Activated CD4-positive, alpha-beta memory T cell treated with anti-CD3 and anti-CD28 coated beads for 36 hours (primary cell): ENCODE measurements at regions of chr11 and their contacts with region 1.

Region 1: DNA sequence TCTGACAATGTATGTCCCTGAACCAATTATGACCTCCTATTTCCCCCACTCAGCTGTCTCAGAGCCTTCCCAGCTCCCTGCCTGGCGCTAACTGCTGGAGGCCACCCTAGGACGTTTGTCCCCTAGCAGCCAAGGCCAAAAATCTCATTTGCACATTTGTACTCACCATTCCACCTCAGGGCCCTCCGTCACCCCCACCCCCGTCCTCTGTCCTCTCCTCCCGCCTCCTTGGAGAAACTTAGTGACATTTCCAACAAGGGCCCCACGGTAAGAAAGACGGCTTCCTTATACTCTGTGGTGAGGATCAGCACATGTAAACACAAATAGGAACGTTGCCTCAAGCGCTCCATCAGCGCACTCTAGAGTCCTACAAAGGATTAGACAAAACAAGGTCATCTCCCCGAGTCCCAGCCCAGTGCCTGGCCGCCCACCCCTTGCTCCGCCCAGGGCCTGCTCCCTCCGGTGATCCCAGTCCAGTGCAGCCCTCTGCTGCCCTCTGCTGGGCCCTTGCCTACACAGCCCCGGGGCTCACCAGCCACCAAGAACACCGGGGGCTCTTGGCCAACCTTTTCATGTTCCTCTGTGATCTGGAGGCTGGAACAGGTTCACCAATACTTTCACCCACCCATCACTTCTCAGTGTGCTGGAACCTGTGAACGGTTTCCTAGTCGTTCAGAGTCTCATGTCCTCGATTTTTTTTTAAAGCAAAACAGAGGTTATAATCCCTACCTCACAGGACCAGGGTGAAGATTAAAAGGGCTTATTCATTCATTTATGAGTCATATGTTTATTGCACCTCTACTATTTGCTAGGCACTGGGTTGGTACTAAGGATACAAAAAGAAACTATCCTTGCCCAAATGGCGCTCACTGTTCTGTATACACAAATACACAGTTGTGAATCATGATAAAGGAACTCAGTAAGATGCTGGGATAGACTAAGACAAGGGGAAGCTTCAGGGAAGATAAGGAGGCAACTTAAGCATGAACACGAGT is 15.3 kb upstream of the CTR9 start:
- DNase-seq: peak; percentile 92
- H3K4me3 Mint-ChIP-seq: peak overlapping the region; percentile 53
- H3K27ac Mint-ChIP-seq: no peak overlapping the region
- H3K4me1 Mint-ChIP-seq: peaks cover 11% of the 10 kb centered on the region
- H3K27me3 Mint-ChIP-seq: peaks cover 2% of the 10 kb centered on the region

Region 2: GRCh38 chr11:10405855-10406592 is 329.8 kb before region 1 on chr11:
- CTCF ChIA-PET with region 1: interaction called, 46 read pairs
- POLR2A ChIA-PET with region 1: no interaction called
- intact Hi-C with region 1: loop called (anchors 1 kb)
- DNase-seq: peak; percentile 60
- H3K4me3 Mint-ChIP-seq: no peak overlapping the region
- H3K27ac Mint-ChIP-seq: no peak overlapping the region
- H3K4me1 Mint-ChIP-seq: peaks cover 15% of the 10 kb centered on the region
- H3K27me3 Mint-ChIP-seq: no peaks in the 10 kb centered on the region

Region 3: GRCh38 chr11:10413268-10413667 is 322.5 kb before region 1 on chr11:
- CTCF ChIA-PET with region 1: interaction called, 14 read pairs
- POLR2A ChIA-PET with region 1: no interaction called
- intact Hi-C with region 1: loop called (anchors 1 kb)
- DNase-seq: peak; percentile 54
- H3K4me3 Mint-ChIP-seq: no peak overlapping the region
- H3K27ac Mint-ChIP-seq: no peak overlapping the region
- H3K4me1 Mint-ChIP-seq: peaks cover 31% of the 10 kb centered on the region
- H3K27me3 Mint-ChIP-seq: no peaks in the 10 kb centered on the region

Region 4: DNA sequence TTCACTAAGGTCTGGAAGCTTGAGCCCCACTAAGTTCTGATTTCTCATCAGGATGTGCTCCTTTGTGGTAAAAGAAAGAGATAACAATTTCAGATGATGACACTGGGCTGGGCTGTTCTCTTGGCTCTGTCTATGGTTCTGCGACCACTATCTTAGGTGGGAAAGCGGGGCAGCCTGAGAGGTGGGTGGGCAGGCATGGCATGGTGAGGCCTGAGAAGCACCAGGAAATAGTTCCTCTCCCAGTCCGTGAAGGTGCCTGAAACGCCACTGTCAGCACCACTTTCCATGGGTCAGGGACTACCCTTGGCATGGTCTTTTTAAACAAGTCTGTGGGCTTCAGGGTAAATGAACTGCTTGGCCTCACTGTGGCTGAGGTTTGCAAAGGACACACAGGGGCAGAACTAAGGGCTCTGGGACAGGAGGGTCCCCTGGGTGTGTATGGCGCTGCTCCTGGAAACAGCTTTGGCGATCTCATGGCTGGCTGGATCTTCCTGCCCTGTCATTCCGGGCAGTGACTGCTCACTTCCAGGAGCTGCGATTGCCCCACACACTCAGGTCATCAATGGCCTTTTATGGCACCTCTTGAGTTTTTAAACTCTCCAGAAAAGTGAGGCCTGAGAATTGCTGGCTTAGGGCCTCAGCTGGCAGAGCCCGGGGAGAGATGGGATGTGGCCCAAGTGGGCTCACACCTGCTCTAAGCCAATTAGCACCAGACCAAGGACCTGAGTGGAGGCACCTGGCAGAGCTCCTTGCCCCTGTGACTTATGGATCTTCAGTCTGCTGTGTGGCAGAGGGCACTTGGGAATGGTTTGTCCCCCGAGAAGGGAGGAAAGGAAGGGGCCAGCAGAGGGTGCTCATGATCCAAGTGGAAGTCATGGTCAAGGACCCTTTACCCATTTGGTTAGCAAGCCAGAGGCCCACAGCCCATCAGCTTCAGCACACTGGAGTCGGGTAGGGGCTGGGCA is 111.7 kb before region 1 on chr11:
- CTCF ChIA-PET with region 1: interaction called, 4 read pairs
- POLR2A ChIA-PET with region 1: no interaction called
- intact Hi-C with region 1: loop called (anchors 1 kb)
- DNase-seq: peak; percentile 19
- H3K4me3 Mint-ChIP-seq: no peak overlapping the region
- H3K27ac Mint-ChIP-seq: peak overlapping the region; percentile 32
- H3K4me1 Mint-ChIP-seq: peaks cover 16% of the 10 kb centered on the region
- H3K27me3 Mint-ChIP-seq: no peaks in the 10 kb centered on the region

Region 5: GRCh38 chr11:10680956-10681487 is 54.8 kb before region 1 on chr11:
- CTCF ChIA-PET with region 1: no interaction called
- POLR2A ChIA-PET with region 1: no interaction called
- intact Hi-C with region 1: no loop called
- DNase-seq: no peak
- H3K4me3 Mint-ChIP-seq: no peak overlapping the region
- H3K27ac Mint-ChIP-seq: no peak overlapping the region
- H3K4me1 Mint-ChIP-seq: no peaks in the 10 kb centered on the region
- H3K27me3 Mint-ChIP-seq: peaks cover 18% of the 10 kb centered on the region